H1 (cell line): ENCODE measurements at regions of chr7 and their contacts with region 1.

Region 1: DNA sequence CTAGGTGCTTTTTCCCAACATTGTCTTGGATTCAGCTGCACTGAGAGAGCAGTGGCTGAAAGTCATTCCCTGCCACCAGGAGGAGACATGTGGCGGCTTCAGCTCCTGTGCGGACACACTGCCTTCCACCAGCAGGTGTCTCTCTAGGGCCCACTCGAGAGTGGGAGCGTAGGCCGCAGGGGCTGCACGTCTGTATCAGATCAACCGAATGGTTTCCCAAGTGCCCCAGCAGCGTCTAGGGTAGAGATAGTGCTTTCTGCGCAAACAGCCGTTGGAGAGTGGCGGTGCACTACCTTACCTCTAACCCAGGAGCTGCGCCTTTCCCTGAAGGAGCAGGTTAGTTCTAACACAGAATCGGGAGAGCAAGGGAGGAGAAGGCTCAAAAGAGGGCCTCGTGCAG is 31.7 kb downstream of the PAPOLB start:
- DNase-seq: peak; percentile 73 to 85
- H3K4me3 ChIP-seq: no peak overlapping the region
- H3K27ac ChIP-seq: no peak overlapping the region
- H3K4me1 ChIP-seq: no peaks in the 10 kb centered on the region
- H3K27me3 ChIP-seq: no peaks in the 10 kb centered on the region
- CTCF ChIP-seq: peak; percentile 98 to 100 (median 100)
- EP300 ChIP-seq: 0 out of 3 replicates have a peak, but pooled peaks of 1 of the 2 experiments have one; percentile 21
- POLR2A ChIP-seq: no peak
- RAD21 ChIP-seq: peak; percentile 85 to 89

Region 2: DNA sequence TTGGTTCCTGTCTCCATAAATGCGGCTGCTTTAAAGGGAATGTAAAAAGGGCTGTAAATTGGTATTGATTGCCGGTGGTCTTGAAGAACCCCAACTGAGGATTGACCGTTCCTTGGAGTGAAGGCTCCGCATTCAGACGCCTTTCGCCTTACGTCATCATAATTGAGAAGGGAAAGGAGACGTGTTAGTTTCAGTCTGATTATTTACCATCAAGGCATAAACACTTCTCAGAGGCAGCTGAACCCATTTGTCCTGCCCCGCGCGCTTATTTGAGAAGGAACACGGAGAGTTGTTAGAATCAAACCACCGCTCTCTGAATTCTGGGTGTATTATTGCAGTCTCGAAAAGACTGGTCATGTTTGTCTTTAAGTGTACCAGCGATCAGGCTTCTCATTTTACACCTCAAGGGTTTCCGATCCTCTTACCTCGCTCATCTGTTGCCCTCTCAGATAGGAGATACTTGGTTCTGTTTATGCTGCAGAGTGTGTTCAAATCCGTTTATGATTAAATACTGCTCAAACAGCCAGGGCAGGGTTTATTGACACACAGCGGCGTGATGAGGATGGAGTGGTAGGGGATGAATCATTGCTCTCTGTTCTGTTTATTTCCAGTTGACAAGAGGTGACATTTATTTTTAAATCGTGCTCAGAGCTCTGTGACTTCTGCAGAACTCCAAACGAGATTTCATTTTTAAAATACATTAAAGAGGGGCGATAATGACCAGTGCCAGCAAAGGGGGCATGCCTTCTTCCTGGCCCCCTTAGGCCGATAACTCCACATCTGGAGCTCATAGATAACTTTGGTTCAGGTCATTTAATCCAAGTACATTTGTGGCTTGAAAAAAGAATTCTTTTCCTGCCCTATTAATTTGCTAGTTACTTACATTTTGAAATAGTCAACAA is 117.6 kb before region 1 on chr7:
- CTCF ChIA-PET with region 1: no interaction called
- POLR2A ChIA-PET with region 1: no interaction called
- DNase-seq: no peak
- H3K4me3 ChIP-seq: no peak overlapping the region
- H3K27ac ChIP-seq: no peak overlapping the region
- H3K4me1 ChIP-seq: peaks cover 0 to 10% (median 2%) of the 10 kb centered on the region in 4 experiments; a peak in 5 of 7 replicates
- H3K27me3 ChIP-seq: peaks cover 30 to 59% (median 54%) of the 10 kb centered on the region in 4 experiments
- CTCF ChIP-seq: no peak
- EP300 ChIP-seq: no peak
- POLR2A ChIP-seq: no peak
- RAD21 ChIP-seq: no peak

Region 3: GRCh38 chr7:4797858-4798705 is 32.1 kb before region 1 on chr7:
- CTCF ChIA-PET with region 1: interaction called, 18 read pairs
- POLR2A ChIA-PET with region 1: no interaction called
- DNase-seq: peak in 1 of 2 experiments; percentile 94
- H3K4me3 ChIP-seq: no peak overlapping the region
- H3K27ac ChIP-seq: no peak overlapping the region
- H3K4me1 ChIP-seq: no peaks in the 10 kb centered on the region
- H3K27me3 ChIP-seq: no peaks in the 10 kb centered on the region
- CTCF ChIP-seq: peak; percentile 89 to 99 (median 99)
- EP300 ChIP-seq: no peak
- POLR2A ChIP-seq: no peak
- RAD21 ChIP-seq: peak; percentile 84 to 89

Region 4: DNA sequence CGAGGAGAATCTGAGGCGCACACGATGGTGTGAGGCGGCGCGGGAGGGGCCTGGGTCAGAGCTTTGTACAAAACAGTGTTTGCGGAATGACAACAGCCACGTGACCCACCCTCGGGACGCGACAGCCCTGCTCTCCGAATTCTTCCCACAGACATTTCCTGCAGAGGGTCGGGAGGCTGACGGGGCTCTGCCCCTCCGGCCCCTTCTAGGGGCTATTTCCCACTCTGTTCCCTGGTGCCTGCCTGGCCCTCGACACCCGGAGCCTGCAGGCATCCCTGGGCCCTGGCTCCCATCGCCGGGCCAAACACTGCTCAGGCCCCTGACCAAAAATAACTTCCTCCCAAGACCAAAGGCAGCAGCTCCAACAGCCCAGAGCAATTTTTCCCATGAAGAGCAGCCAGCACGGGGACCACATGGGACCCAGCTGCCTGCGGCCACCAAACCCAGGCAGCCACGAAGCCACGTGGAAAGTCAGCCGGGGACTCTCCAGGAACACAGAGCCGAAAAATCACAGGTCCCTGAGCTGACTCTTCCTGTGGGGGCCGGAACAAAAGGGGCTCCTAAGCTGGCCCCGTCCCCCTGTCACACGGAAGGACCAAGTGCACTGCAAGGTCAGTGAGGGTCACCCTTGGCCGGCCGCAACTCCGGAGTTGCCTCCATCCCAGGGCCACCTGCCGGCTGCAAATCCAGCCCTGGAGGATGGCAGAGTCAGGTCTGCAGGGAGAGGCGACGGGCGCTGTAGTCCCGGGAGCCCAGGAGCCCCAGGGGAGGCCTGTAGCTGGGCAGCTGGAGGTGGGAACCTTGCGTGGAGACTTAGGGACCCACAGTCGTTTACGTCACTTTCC is 10.4 kb before region 1 on chr7:
- CTCF ChIA-PET with region 1: interaction called, 25 read pairs
- POLR2A ChIA-PET with region 1: interaction called, 3 read pairs
- DNase-seq: no peak
- H3K4me3 ChIP-seq: no peak overlapping the region
- H3K27ac ChIP-seq: no peak overlapping the region
- H3K4me1 ChIP-seq: no peaks in the 10 kb centered on the region
- H3K27me3 ChIP-seq: no peaks in the 10 kb centered on the region
- CTCF ChIP-seq: no peak
- EP300 ChIP-seq: no peak
- POLR2A ChIP-seq: no peak
- RAD21 ChIP-seq: no peak

Region 5: GRCh38 chr7:4849369-4849768 is 19.2 kb after region 1 on chr7:
- CTCF ChIA-PET with region 1: interaction called, 51 read pairs
- POLR2A ChIA-PET with region 1: no interaction called
- DNase-seq: no peak
- H3K4me3 ChIP-seq: no peak overlapping the region
- H3K27ac ChIP-seq: no peak overlapping the region
- H3K4me1 ChIP-seq: no peaks in the 10 kb centered on the region
- H3K27me3 ChIP-seq: no peaks in the 10 kb centered on the region
- CTCF ChIP-seq: 0 out of 4 replicates have a peak, but pooled peaks of 1 of the 3 experiments have one; percentile 11
- EP300 ChIP-seq: no peak
- POLR2A ChIP-seq: no peak
- RAD21 ChIP-seq: peak; percentile 14 to 29; a peak in 2 of 4 replicates

Region 6: GRCh38 chr7:5077740-5078139 is 247.6 kb after region 1 on chr7:
- CTCF ChIA-PET with region 1: interaction called, 20 read pairs
- POLR2A ChIA-PET with region 1: no interaction called
- DNase-seq: no peak
- H3K4me3 ChIP-seq: no peak overlapping the region
- H3K27ac ChIP-seq: no peak overlapping the region
- H3K4me1 ChIP-seq: no peaks in the 10 kb centered on the region
- H3K27me3 ChIP-seq: no peaks in the 10 kb centered on the region; a peak in 1 of 7 replicates
- CTCF ChIP-seq: no peak
- EP300 ChIP-seq: no peak
- POLR2A ChIP-seq: no peak
- RAD21 ChIP-seq: no peak

Region 7: GRCh38 chr7:5083311-5083711 is 253.1 kb after region 1 on chr7:
- CTCF ChIA-PET with region 1: interaction called, 62 read pairs
- POLR2A ChIA-PET with region 1: no interaction called
- DNase-seq: no peak
- H3K4me3 ChIP-seq: no peak overlapping the region
- H3K27ac ChIP-seq: no peak overlapping the region
- H3K4me1 ChIP-seq: no peaks in the 10 kb centered on the region
- H3K27me3 ChIP-seq: 0 out of 7 replicates have a peak, but pooled peaks cover 0 to 3% (median 1%) of the 10 kb centered on the region in 4 experiments
- CTCF ChIP-seq: no peak
- EP300 ChIP-seq: no peak
- POLR2A ChIP-seq: no peak
- RAD21 ChIP-seq: no peak